ENCODE measurements at regions of chrX and their contacts with region 1.

Region 1: GRCh38 chrX:135521405-135522189 is 1.1 kb downstream of the INTS6L start:
- DNase-seq: peak; percentile 89
- ATAC-seq: peak; percentile 73
- H3K4me3 ChIP-seq: peak overlapping the region; percentile 62 to 86 (median 81)
- H3K4me3 Mint-ChIP-seq: peak overlapping the region; percentile 99
- H3K27ac ChIP-seq: peak overlapping the region; percentile 81 to 88
- H3K27ac Mint-ChIP-seq: peak overlapping the region; percentile 100
- H3K4me1 ChIP-seq: peaks cover 5 to 14% of the 10 kb centered on the region in 2 donors
- H3K4me1 Mint-ChIP-seq: peaks cover 33% of the 10 kb centered on the region
- H3K27me3 ChIP-seq: no peaks in the 10 kb centered on the region
- H3K27me3 Mint-ChIP-seq: no peaks in the 10 kb centered on the region
- CTCF ChIP-seq: no peak

Region 2: DNA sequence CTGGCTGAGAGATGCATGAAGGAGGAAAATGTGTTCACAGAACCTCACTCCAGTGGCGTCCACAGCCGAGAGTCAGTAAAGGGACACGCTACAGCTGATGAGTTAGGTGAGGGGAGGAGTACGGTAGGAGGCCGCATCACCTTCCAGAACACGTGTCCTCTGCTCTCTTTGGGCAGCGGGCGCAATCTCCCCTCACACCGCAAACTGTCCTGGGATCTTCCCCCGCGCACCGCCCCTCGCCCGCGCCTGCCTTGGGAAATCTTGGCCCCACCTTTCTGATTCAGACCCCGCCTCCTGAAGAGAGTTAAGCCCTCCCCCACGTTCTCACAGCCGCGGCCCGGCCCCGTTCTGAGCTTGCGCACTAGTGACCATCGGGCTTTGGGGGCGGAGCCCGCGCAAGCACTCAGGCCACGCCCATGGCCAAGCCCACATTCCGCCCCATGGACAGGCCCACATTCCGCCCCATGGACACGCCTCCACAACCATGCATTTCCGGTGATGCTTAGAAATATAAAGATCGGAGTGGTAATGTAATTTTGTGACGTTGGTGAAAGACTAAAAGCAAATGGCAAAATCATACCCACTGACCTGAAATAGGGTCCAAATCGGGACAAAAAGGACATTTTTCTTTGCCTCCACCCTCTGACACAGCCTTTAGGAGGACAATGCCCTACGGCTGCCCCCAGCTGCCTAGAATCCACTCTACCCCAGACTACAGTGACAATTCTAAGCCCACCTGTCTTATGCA is 517.5 kb before region 1 on chrX:
- CTCF ChIA-PET with region 1: no interaction called
- POLR2A ChIA-PET with region 1: no interaction called
- intact Hi-C with region 1: loop called (anchors 2 kb)
- DNase-seq: peak; percentile 86
- ATAC-seq: peak; percentile 98
- H3K4me3 ChIP-seq: peak overlapping the region; percentile 25 to 56 (median 47)
- H3K4me3 Mint-ChIP-seq: peak overlapping the region; percentile 91
- H3K27ac ChIP-seq: no peak overlapping the region
- H3K27ac Mint-ChIP-seq: peak overlapping the region; percentile 39
- H3K4me1 ChIP-seq: peaks cover 8 to 9% of the 10 kb centered on the region in 2 donors
- H3K4me1 Mint-ChIP-seq: peaks cover 10% of the 10 kb centered on the region
- H3K27me3 ChIP-seq: peaks cover 0 to 2% (median 0%) of the 10 kb centered on the region in 4 experiments
- H3K27me3 Mint-ChIP-seq: no peaks in the 10 kb centered on the region
- CTCF ChIP-seq: no peak

Region 3: DNA sequence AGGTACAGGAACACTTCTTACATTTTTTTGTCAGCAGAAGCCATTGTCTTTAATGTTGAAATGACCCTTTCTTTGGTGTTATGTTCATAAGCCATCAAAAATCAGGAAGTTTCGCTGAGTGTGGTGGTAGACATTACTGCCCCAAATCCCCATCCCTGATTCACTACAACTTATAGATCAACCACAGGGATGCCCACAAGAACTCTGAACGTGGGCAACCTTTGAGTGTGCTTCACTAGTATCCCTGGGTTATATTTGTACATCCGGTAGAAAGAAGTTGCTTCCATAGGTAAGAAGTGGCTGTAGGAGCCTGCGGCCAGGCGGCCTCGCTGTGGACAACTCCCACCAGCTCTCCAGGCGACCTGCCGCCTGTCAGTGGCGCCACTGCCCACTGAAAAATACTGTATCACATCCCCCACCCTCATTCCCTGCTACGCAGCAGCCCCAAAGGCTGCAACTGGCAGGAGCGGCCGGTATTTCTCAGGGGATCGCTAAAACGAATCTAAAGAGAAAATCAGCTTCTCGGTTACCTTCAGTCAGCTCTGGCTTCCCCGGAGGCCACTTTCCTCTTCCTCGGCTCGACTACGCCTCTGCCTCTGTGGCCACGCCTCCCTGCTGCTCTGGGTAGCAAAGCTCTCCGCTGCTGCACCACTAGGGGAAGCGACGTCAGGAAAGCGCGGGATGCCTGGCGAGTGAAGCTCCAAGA is 226.2 kb before region 1 on chrX:
- CTCF ChIA-PET with region 1: no interaction called
- POLR2A ChIA-PET with region 1: no interaction called
- intact Hi-C with region 1: loop called (anchors 1 kb)
- DNase-seq: peak; percentile 62
- ATAC-seq: peak; percentile 95
- H3K4me3 ChIP-seq: peak overlapping the region; percentile 51 to 72 (median 69)
- H3K4me3 Mint-ChIP-seq: peak overlapping the region; percentile 93
- H3K27ac ChIP-seq: peak overlapping the region; percentile 45 to 57
- H3K27ac Mint-ChIP-seq: peak overlapping the region; percentile 84
- H3K4me1 ChIP-seq: peaks cover 0 to 11% of the 10 kb centered on the region in 2 donors
- H3K4me1 Mint-ChIP-seq: peaks cover 13% of the 10 kb centered on the region
- H3K27me3 ChIP-seq: no peaks in the 10 kb centered on the region
- H3K27me3 Mint-ChIP-seq: no peaks in the 10 kb centered on the region
- CTCF ChIP-seq: peak; percentile 23

Region 4: GRCh38 chrX:135421537-135421931 is 100.1 kb before region 1 on chrX:
- CTCF ChIA-PET with region 1: no interaction called
- POLR2A ChIA-PET with region 1: interaction called, 4 read pairs
- intact Hi-C with region 1: loop called (anchors 1 kb)
- DNase-seq: peak; percentile 83
- ATAC-seq: peak; percentile 93
- H3K4me3 ChIP-seq: peak overlapping the region in 4 of 5 experiments; percentile 17 to 51 (median 42)
- H3K4me3 Mint-ChIP-seq: peak overlapping the region; percentile 79
- H3K27ac ChIP-seq: no peak overlapping the region
- H3K27ac Mint-ChIP-seq: no peak overlapping the region
- H3K4me1 ChIP-seq: peaks cover 0 to 8% of the 10 kb centered on the region in 2 donors
- H3K4me1 Mint-ChIP-seq: peaks cover 3% of the 10 kb centered on the region
- H3K27me3 ChIP-seq: no peaks in the 10 kb centered on the region
- H3K27me3 Mint-ChIP-seq: no peaks in the 10 kb centered on the region
- CTCF ChIP-seq: no peak

Region 5: GRCh38 chrX:135556055-135556454 is 34.5 kb after region 1 on chrX:
- CTCF ChIA-PET with region 1: no interaction called
- POLR2A ChIA-PET with region 1: no interaction called
- intact Hi-C with region 1: loop called (anchors 5 kb)
- DNase-seq: peak; percentile 30
- ATAC-seq: peak; percentile 41
- H3K4me3 ChIP-seq: no peak overlapping the region
- H3K4me3 Mint-ChIP-seq: no peak overlapping the region
- H3K27ac ChIP-seq: peak overlapping the region in 1 of 2 donors; percentile 55
- H3K27ac Mint-ChIP-seq: peak overlapping the region; percentile 82
- H3K4me1 ChIP-seq: peaks cover 9 to 10% of the 10 kb centered on the region in 2 donors
- H3K4me1 Mint-ChIP-seq: peaks cover 12% of the 10 kb centered on the region
- H3K27me3 ChIP-seq: no peaks in the 10 kb centered on the region
- H3K27me3 Mint-ChIP-seq: no peaks in the 10 kb centered on the region
- CTCF ChIP-seq: no peak

Region 6: DNA sequence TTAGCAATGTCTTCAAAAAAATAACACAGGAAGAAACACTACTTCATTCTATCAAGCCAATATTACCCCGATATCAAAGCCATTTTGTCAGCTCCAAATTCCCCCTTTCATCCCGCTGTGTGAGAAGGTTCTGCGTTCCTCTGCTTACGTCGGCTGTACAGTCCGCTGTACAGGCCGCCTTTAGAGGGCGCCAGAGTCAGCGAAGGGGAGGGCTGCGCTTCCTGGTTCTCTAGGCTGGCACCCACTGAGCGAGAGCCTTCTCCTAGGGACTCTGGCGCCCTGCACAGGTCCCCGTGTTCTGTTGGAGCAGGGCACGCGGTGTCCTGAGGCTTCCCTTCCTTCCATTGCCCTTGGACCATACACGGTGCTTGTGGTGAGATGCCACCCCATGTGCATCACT is 166.5 kb after region 1 on chrX:
- CTCF ChIA-PET with region 1: no interaction called
- POLR2A ChIA-PET with region 1: no interaction called
- intact Hi-C with region 1: no loop called
- DNase-seq: no peak
- ATAC-seq: no peak
- H3K4me3 ChIP-seq: no peak overlapping the region
- H3K4me3 Mint-ChIP-seq: no peak overlapping the region
- H3K27ac ChIP-seq: no peak overlapping the region
- H3K27ac Mint-ChIP-seq: no peak overlapping the region
- H3K4me1 ChIP-seq: no peaks in the 10 kb centered on the region
- H3K4me1 Mint-ChIP-seq: no peaks in the 10 kb centered on the region
- H3K27me3 ChIP-seq: no peaks in the 10 kb centered on the region
- H3K27me3 Mint-ChIP-seq: no peaks in the 10 kb centered on the region
- CTCF ChIP-seq: no peak

Region 7: GRCh38 chrX:135985141-135985972 is 463.8 kb after region 1 on chrX and contains the start of gene SLC9A6:
- CTCF ChIA-PET with region 1: no interaction called
- POLR2A ChIA-PET with region 1: no interaction called
- intact Hi-C with region 1: loop called (anchors 5 kb)
- DNase-seq: peak; percentile 76
- ATAC-seq: peak; percentile 93
- H3K4me3 ChIP-seq: peak within 1 kb of the TSS; percentile 65 to 81 (median 77)
- H3K4me3 Mint-ChIP-seq: peak within 1 kb of the TSS; percentile 91
- H3K27ac ChIP-seq: peak within 1 kb of the TSS; percentile 62 to 77
- H3K27ac Mint-ChIP-seq: peak within 1 kb of the TSS; percentile 91
- H3K4me1 ChIP-seq: peaks cover 23 to 33% of the 10 kb centered on the region in 2 donors
- H3K4me1 Mint-ChIP-seq: peaks cover 43% of the 10 kb centered on the region
- H3K27me3 ChIP-seq: no peaks in the 10 kb centered on the region
- H3K27me3 Mint-ChIP-seq: no peaks in the 10 kb centered on the region
- CTCF ChIP-seq: no peak
- total RNA-seq, gene SLC9A6: 14.5 and 15.2 TPM in 2 replicates

Region 8: DNA sequence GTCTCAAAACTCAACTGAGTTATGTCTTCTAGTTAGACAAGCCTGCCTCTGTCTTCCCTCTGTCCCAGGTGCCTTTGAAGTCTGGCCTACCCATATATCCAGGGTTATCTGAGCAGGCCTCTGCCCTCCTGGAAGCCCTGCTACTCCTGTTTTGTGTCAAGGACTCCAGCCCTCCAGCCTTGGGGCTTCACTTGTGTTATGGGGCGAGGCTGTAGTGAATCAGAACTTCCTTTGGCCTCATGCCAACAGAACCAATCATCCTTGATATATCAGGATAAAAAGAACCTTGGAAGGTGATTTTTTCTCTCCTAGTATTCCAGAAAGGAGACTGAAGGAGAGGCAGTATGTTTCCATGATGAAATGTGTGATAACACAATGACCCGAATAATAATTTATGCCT is 770.2 kb after region 1 on chrX:
- CTCF ChIA-PET with region 1: no interaction called
- POLR2A ChIA-PET with region 1: no interaction called
- intact Hi-C with region 1: no loop called
- DNase-seq: no peak
- ATAC-seq: no peak
- H3K4me3 ChIP-seq: no peak overlapping the region
- H3K4me3 Mint-ChIP-seq: no peak overlapping the region
- H3K27ac ChIP-seq: no peak overlapping the region
- H3K27ac Mint-ChIP-seq: no peak overlapping the region
- H3K4me1 ChIP-seq: no peaks in the 10 kb centered on the region
- H3K4me1 Mint-ChIP-seq: no peaks in the 10 kb centered on the region
- H3K27me3 ChIP-seq: no peaks in the 10 kb centered on the region
- H3K27me3 Mint-ChIP-seq: no peaks in the 10 kb centered on the region
- CTCF ChIP-seq: no peak